Right ventricle myocardium inferior (tissue), 1 donor: ENCODE measurements at regions of chr6 and their contacts with region 1.

Region 1: DNA sequence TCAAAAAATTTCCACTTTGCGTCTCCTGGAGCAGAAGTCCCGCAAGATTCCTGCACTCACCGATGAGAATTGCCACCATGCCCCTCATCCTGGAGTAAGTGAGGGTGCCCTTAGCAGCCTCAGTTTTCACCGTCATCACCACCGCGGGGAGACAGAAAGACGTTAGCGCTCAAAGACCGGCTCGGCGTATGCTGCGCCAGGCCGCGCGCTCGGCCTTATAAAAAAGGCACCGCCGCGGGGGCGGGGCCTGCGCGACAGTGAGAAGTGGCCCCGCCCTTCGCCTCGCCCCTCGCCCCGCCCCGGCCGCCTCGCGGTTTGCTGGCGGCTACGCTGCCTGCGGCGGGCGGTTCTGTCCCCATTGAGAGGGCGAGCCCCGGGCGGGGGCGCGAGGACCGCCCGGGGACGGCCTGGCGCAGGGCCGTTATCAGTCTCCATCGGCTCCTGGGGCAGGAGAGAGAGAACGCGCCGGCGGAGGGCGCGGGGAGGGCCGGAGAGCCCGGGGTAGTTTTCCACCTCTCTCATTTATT is 122.3 kb upstream of the SLC2A12 start:
- DNase-seq: peak; percentile 98
- ATAC-seq: peak; percentile 94

Region 2: DNA sequence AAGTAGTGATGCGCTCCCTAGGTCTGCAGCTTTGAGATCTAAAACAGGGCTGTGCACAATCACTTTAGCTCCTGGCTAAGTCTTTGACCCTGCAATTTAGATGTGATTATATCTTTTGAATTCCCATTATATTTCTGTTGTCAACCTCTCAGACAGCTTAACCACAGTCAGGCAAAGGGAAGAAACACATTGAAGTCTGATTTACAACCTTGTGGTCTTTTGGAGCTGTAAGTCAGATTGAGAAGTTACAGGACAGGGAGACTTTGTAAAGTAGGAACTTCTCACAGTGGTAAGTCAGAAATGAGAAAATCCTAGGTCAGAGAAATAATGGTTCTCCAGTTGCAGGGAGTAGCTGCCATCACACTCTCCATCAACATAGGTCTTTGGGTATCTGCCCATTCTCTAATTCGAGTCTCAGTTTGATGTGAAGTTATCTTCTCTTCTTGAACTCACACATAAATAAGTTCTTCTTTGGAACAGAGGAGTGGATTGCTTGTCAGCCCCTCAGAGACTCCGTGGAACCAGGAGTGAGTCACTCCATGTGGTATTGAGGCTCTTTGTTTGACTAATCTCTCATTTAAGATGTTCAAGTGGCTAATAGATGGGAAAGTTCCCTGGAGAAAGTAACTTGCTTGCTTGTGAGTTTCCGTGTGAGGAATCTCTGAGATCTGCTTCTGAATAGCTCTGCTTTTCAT is 178.2 kb after region 1 on chr6:
- intact Hi-C with region 1: no loop called
- DNase-seq: no peak
- ATAC-seq: no peak

Region 3: DNA sequence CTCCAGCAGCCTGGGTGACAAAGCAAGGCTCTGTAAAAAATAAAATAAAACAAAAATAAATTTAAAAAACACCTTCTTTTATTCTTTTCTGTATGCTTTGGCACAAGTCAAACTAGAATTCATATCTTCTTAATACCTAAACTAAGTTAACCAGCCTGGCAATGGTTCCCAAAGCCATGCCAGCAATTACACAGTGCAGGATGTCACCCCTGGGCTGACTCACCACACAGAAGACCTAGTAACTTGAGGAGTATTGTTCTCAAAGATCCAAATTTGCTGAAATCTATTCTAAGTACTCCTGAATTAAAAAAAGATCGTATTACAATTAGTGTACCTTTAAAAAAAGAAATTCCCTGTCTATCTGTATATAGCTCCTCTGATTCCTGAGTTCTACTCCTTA is 305.9 kb after region 1 on chr6:
- intact Hi-C with region 1: loop called (anchors 5 kb)
- DNase-seq: no peak
- ATAC-seq: no peak

Region 4: GRCh38 chr6:134537146-134537555 is 362.4 kb after region 1 on chr6:
- intact Hi-C with region 1: loop called (anchors 5 kb)
- DNase-seq: no peak
- ATAC-seq: no peak

Region 5: DNA sequence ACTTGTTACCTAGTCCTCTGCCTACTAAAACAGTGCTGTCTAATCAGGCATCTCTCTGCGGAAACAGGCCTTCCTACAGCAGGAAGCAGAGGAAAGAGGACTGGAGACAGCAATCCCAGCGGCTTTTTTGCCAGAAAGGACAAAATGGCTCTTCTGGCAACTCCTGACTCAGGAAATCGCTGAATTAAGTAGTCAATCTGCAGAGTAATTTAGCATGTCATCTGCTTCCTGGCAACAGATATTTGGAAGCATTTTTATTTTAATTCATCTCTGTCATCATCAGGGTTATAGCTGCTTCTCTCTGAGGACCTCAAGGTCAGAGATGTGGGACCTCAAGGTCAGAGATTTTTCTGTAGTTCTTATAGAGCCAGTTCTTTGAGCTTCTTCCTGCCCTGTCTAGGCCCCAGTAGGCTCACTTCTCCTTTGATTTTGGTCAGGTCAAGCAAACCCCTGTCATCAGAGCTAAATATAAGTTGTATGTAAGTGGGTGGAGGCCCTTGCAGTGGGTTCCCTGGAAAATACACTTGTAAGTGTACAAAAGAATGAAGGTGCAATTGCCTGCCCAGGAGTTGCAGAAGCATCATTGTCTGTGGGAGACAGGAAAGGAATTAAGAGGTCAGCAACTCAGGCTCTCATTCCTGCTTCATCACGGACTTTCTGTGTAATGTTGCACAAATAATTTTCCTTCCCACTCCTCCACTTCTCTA is 545.8 kb after region 1 on chr6:
- intact Hi-C with region 1: loop called (anchors 5 kb)
- DNase-seq: no peak
- ATAC-seq: peak; percentile 56

Region 6: GRCh38 chr6:134882426-134883038 is 707.8 kb after region 1 on chr6:
- intact Hi-C with region 1: loop called (anchors 1 kb)
- DNase-seq: no peak
- ATAC-seq: peak; percentile 77